ENCODE measurements at regions of chr17 and their contacts with region 1.

Region 1: DNA sequence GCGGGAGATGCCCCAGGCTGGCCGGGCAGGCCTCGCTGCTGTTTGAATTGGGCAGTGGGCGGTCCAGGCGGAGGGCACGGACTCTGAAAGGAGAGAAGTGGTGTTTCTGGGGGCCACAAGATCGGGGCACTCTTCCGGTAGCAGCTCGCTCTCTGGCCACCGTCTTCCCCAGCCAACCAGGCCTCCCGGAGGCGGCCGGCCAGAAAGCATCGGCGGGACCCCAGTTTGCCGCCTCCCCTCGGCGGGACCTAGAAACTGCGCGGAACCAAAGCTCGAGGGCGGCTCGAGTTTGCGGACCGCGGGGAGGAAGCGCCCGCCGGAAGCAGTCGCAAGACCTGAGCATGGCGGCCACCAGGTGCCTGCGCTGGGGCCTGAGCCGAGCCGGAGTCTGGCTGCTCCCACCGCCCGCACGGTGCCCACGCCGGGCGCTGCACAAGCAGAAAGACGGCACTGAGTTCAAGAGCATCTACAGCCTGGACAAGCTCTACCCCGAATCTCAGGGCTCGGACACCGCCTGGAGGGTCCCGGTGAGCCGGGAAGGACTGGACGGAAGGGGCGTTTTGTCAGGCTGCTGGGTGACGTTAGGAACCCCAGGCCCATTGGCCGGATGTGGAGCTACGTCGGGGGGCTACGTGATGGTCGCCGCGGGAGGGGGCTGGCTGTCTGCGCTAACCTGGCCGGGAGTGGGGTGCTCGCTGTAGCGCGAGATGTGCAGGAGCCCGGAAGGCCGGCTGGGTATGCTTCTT is at the start of gene MRPL58:
- DNase-seq: peak; percentile 90
- ATAC-seq: peak; percentile 96
- H3K4me3 Mint-ChIP-seq: peak within 1 kb of the TSS; percentile 95
- H3K27ac Mint-ChIP-seq: peak within 1 kb of the TSS; percentile 93
- H3K4me1 Mint-ChIP-seq: peaks cover 15% of the 10 kb centered on the region
- H3K27me3 Mint-ChIP-seq: no peaks in the 10 kb centered on the region
- total RNA-seq, gene MRPL58: 45.1 to 45.8 TPM

Region 2: DNA sequence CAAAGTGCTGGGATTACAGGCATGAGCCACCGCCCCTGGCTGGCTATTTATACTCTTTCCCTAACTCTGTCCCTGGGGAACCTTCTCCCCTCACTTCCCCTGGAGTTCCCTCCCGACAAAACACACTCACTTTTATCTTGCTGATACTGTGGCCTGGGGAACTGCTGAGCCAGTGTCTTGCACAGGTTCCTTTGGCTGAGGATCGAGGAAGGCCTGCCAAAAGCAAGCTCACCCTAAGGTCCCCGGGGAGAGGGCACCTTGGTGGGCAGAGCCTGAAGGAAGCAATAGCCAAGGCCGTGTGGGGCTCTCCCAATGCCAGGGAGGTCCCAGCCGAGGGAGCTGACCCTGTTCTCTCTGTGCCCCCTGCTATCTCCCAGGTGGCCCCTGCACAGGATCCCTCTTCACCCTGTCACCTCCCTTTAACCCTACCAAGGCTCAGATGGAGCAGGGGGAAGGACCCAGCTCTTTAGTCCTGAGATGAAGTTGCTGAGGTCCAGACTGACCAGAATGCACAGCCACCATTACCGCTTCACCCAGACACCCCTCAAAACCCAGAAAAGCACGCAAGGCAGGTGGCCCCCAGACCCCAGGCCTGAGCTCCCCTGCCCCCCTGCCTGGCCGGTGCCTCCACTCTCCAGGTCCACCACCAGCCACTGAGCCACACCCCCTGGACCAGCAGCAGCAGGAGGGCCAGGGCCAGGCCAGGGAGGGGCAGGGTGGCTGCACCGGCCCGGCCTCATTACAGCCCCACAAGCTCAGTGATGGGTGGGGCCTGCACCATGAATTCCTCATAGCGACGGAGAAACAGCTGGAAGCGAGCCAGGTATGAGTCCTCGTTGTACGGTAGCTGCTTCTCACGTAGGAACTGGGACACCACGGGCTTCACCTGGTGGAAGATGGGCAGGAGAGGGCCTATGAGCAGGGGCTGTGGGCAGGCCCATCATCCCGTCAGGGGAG is 134.6 kb before region 1 on chr17:
- CTCF ChIA-PET with region 1: no interaction called
- POLR2A ChIA-PET with region 1: no interaction called
- DNase-seq: no peak
- ATAC-seq: no peak
- H3K4me3 Mint-ChIP-seq: no peak overlapping the region
- H3K27ac Mint-ChIP-seq: no peak overlapping the region
- H3K4me1 Mint-ChIP-seq: peaks cover 12% of the 10 kb centered on the region
- H3K27me3 Mint-ChIP-seq: peaks cover 5% of the 10 kb centered on the region

Region 3: DNA sequence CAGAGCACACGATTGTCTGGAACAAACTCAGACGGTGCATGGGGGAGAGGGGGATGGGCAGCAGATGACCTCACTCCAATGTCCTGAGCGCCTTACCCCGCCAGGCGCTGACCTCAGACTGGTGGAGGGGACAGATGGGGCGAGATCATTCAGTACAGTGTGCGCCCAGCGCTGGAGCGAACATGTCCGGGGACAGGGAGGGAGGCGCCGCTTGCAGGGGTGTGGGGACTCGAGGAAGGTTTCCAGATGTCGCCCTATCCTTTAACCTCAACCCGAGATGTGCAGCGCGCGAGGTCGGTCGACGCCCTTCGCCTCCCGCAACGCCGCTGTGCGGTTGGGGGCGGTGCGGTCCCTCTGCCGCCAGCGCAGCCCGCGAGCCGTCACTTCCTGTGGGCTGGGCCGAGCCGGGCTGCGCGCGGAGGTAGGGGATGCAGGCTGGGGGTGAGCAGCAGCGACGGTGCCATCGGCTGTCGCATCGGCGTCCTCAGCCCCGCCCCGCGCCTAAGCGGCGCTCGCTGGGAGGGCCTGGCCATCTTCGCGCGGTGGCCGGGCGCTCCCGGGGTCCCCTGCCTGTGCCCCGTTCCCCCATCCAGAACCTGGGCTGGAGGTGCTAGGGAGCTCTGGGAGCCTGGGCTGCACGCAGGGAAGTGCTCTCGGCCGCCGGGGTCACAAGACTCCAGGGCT is 30.4 kb before region 1 on chr17:
- CTCF ChIA-PET with region 1: interaction called, 17 read pairs
- POLR2A ChIA-PET with region 1: interaction called, 14 read pairs
- DNase-seq: peak; percentile 82
- ATAC-seq: peak; percentile 93
- H3K4me3 Mint-ChIP-seq: peak overlapping the region; percentile 74
- H3K27ac Mint-ChIP-seq: peak overlapping the region; percentile 70
- H3K4me1 Mint-ChIP-seq: peaks cover 22% of the 10 kb centered on the region
- H3K27me3 Mint-ChIP-seq: peaks cover 40% of the 10 kb centered on the region

Region 4: DNA sequence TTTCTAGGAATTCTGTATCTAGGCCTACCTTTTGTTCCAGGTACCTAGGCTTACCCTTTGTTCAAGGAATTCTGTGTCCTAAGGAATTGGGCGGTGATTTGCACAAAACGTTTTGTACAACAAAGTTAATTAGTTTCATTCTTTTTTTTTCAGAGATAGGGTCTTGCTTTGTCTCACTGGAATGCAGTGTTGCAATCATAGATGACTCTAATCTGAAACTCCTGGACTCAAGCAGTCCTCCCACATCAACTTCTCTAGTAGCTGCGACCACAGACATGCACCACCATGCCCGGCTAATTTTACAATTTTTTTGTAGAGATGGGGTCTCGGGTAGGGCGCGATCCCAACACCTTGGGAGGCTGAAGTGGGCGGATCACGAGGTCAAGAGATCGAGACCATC is 18.0 kb before region 1 on chr17:
- CTCF ChIA-PET with region 1: interaction called, 5 read pairs
- POLR2A ChIA-PET with region 1: interaction called, 12 read pairs
- DNase-seq: no peak
- ATAC-seq: no peak
- H3K4me3 Mint-ChIP-seq: no peak overlapping the region
- H3K27ac Mint-ChIP-seq: no peak overlapping the region
- H3K4me1 Mint-ChIP-seq: peaks cover 10% of the 10 kb centered on the region
- H3K27me3 Mint-ChIP-seq: peaks cover 17% of the 10 kb centered on the region

Region 5: GRCh38 chr17:75034236-75034908 is 21.9 kb after region 1 on chr17:
- CTCF ChIA-PET with region 1: interaction called, 18 read pairs
- POLR2A ChIA-PET with region 1: interaction called, 26 read pairs
- DNase-seq: peak; percentile 93
- ATAC-seq: peak; percentile 67
- H3K4me3 Mint-ChIP-seq: peak overlapping the region; percentile 93
- H3K27ac Mint-ChIP-seq: peak overlapping the region; percentile 95
- H3K4me1 Mint-ChIP-seq: peaks cover 52% of the 10 kb centered on the region
- H3K27me3 Mint-ChIP-seq: peaks cover 2% of the 10 kb centered on the region

Region 6: GRCh38 chr17:75205037-75205792 is 192.7 kb after region 1 on chr17 and contains the start of gene NUP85:
- CTCF ChIA-PET with region 1: interaction called, 14 read pairs
- POLR2A ChIA-PET with region 1: no interaction called
- DNase-seq: peak; percentile 94
- ATAC-seq: peak; percentile 87
- H3K4me3 Mint-ChIP-seq: peak within 1 kb of the TSS; percentile 97
- H3K27ac Mint-ChIP-seq: peak within 1 kb of the TSS; percentile 100
- H3K4me1 Mint-ChIP-seq: peaks cover 35% of the 10 kb centered on the region
- H3K27me3 Mint-ChIP-seq: no peaks in the 10 kb centered on the region
- total RNA-seq, gene NUP85: 135 TPM

Measured in activated CD8-positive, alpha-beta T cell treated with anti-CD3 and anti-CD28 coated beads, Interleukin-2, amount 10 ng/mL, durations not matched to agents 7 days and 5 days (primary cell).